ENCODE measurements at regions of chr17 and their contacts with region 1.

Region 1: GRCh38 chr17:43483674-43484372 is at the start of gene DHX8:
- DNase-seq: peak; percentile 99
- ATAC-seq: peak; percentile 94
- H3K4me3 Mint-ChIP-seq: peak within 1 kb of the TSS; percentile 100
- H3K27ac Mint-ChIP-seq: peak within 1 kb of the TSS; percentile 99
- H3K4me1 Mint-ChIP-seq: peaks cover 19% of the 10 kb centered on the region
- H3K27me3 Mint-ChIP-seq: no peaks in the 10 kb centered on the region
- total RNA-seq, gene DHX8: 42.6 to 46.9 TPM

Region 2: DNA sequence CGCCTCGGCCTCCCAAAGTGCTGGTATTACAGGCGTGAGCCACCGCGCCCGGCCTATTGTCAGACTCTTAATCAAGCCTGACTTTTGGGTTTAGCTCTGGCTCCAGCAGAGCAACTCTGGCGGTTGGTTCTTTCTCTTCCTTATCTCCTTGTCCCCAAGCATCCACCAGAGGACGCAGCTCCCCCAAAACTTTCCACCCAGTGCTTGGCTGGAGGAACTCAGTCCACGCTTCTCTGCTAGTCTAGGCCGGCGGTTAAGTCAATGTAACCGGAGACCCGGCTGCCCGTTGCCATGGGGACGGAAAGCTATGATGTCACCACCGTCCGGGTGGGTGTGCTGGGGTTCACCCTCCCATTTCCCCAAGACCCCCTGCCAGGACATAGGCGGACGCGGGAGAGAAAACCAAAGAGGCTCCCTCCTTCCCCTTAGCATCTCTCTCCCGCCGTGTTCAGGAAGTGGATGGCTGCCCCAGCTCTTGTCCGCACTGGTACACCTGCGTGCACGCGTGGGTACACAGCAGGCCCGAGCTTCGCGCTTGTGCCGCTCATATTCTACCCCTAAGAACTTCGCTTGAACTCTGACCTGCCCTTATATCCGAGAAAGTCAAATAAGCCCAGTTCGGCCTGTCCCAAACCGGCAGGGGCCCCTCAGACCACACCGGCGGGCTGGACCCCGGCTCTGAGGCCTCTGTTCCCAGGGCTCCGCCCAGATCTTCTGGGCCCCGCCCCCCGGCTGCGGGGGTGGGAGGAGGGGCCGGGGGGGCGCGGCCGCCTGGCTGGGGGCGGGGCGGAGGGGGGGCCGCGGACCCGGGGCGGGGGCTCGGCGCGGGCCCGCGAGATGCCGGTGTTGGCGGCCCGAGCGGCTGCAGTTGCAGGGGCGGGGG is 459.2 kb before region 1 on chr17 and contains the start of gene RND2:
- CTCF ChIA-PET with region 1: no interaction called
- POLR2A ChIA-PET with region 1: no interaction called
- intact Hi-C with region 1: loop called in 1 of 2 experiments (anchors 5 kb)
- DNase-seq: peak; percentile 89
- ATAC-seq: peak; percentile 68
- H3K4me3 Mint-ChIP-seq: peak within 1 kb of the TSS; percentile 78
- H3K27ac Mint-ChIP-seq: peak within 1 kb of the TSS; percentile 71
- H3K4me1 Mint-ChIP-seq: peaks cover 26% of the 10 kb centered on the region
- H3K27me3 Mint-ChIP-seq: no peaks in the 10 kb centered on the region
- total RNA-seq, gene RND2: 0.05 to 0.16 TPM

Region 3: GRCh38 chr17:43200127-43200526 is 283.7 kb before region 1 on chr17:
- CTCF ChIA-PET with region 1: no interaction called
- POLR2A ChIA-PET with region 1: no interaction called
- intact Hi-C with region 1: no loop called
- DNase-seq: peak; percentile 30
- ATAC-seq: peak; percentile 61
- H3K4me3 Mint-ChIP-seq: no peak overlapping the region
- H3K27ac Mint-ChIP-seq: peak overlapping the region; percentile 37
- H3K4me1 Mint-ChIP-seq: peaks cover 8% of the 10 kb centered on the region
- H3K27me3 Mint-ChIP-seq: no peaks in the 10 kb centered on the region

Region 4: DNA sequence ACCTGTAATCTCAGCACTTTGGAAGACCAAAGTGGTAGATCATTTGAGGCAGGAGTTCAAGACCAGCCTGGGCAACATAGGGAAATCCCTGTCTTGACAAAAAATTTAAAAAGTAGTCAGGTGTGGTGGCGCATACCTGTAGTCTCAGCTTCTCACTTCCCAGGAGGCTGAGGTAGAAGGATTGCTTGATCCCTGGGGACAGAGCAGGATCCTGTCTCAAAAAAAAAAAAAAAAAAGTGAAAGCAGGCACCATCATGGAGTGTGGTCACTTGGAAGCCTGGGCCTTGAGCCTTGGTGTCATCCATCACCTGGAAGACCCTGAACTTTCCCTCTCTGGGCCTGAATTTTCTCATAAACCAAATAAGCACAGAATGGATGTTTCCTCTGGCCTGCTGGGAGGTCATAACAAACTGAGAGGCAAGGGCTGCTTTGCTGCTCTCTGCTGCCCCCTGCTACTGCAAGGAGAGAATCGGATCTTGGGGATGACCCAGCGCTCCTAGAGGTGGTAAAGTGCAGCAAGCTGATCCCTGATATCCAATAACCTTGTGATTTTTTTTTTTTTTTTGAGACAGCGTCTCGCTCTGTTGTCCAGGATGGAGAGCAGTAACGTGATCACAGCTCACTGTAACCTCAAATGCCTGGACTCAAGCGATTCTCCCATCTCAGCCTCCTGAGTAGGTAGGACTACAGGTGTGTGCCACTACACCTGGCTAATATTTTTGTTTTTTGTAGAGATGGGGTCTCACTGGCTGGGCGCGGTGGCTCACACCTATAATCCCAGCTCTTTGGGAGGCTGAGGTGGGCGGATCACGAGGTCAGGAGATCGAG is 174.1 kb before region 1 on chr17:
- CTCF ChIA-PET with region 1: no interaction called
- POLR2A ChIA-PET with region 1: no interaction called
- intact Hi-C with region 1: no loop called
- DNase-seq: no peak
- ATAC-seq: no peak
- H3K4me3 Mint-ChIP-seq: no peak overlapping the region
- H3K27ac Mint-ChIP-seq: no peak overlapping the region
- H3K4me1 Mint-ChIP-seq: peaks cover 7% of the 10 kb centered on the region
- H3K27me3 Mint-ChIP-seq: no peaks in the 10 kb centered on the region

Region 5: GRCh38 chr17:43367737-43368242 is 116.0 kb before region 1 on chr17:
- CTCF ChIA-PET with region 1: interaction called, 26 read pairs
- POLR2A ChIA-PET with region 1: interaction called, 72 read pairs
- intact Hi-C with region 1: loop called in 1 of 2 experiments (anchors 1 kb)
- DNase-seq: peak; percentile 62
- ATAC-seq: peak; percentile 53
- H3K4me3 Mint-ChIP-seq: peak overlapping the region; percentile 85
- H3K27ac Mint-ChIP-seq: peak overlapping the region; percentile 100
- H3K4me1 Mint-ChIP-seq: peaks cover 57% of the 10 kb centered on the region
- H3K27me3 Mint-ChIP-seq: no peaks in the 10 kb centered on the region

Region 6: DNA sequence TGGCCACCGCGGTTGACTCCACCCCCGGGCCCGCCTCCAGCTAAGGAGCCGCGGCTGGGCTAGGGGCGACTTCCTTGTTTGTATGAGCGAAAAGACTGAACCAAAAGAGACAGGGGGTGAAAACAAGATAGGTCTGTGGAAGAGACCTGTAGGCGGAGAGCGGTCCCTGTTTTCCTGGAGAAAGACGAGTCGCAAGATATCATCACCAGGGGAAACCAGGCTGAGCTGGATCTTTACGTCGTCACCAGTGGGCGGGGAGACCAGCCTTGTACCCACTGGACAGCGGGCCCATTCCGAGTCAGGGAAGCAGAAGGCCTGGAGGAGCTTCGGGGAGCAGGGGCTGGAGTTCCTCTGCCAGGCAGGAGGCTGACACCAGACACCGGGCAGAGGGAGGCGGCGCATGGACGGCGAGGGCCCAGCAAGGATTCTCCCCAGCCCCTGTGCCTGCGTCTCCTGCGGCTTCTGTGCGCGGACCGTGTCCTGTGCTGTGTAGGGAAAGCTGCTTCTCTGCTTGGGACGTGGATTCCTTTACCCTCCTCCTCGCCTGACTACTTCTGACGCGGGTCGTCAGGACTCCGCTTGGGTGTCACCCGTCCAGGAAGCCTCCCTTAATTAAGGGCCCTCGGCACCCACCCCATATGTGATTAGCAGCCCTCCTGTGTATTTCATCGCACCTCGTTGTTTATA is 95.3 kb before region 1 on chr17:
- CTCF ChIA-PET with region 1: interaction called, 240 read pairs
- POLR2A ChIA-PET with region 1: interaction called, 22 read pairs
- intact Hi-C with region 1: loop called (anchors 1 kb)
- DNase-seq: peak; percentile 95
- ATAC-seq: peak; percentile 82
- H3K4me3 Mint-ChIP-seq: peak overlapping the region; percentile 80
- H3K27ac Mint-ChIP-seq: peak overlapping the region; percentile 98
- H3K4me1 Mint-ChIP-seq: peaks cover 16% of the 10 kb centered on the region
- H3K27me3 Mint-ChIP-seq: no peaks in the 10 kb centered on the region

Region 7: GRCh38 chr17:43393944-43394482 is 89.8 kb before region 1 on chr17:
- CTCF ChIA-PET with region 1: interaction called, 240 read pairs
- POLR2A ChIA-PET with region 1: interaction called, 13 read pairs
- intact Hi-C with region 1: loop called (anchors 1 kb)
- DNase-seq: peak; percentile 93
- ATAC-seq: peak; percentile 55
- H3K4me3 Mint-ChIP-seq: no peak overlapping the region
- H3K27ac Mint-ChIP-seq: peak overlapping the region; percentile 31
- H3K4me1 Mint-ChIP-seq: peaks cover 20% of the 10 kb centered on the region
- H3K27me3 Mint-ChIP-seq: no peaks in the 10 kb centered on the region

Region 8: DNA sequence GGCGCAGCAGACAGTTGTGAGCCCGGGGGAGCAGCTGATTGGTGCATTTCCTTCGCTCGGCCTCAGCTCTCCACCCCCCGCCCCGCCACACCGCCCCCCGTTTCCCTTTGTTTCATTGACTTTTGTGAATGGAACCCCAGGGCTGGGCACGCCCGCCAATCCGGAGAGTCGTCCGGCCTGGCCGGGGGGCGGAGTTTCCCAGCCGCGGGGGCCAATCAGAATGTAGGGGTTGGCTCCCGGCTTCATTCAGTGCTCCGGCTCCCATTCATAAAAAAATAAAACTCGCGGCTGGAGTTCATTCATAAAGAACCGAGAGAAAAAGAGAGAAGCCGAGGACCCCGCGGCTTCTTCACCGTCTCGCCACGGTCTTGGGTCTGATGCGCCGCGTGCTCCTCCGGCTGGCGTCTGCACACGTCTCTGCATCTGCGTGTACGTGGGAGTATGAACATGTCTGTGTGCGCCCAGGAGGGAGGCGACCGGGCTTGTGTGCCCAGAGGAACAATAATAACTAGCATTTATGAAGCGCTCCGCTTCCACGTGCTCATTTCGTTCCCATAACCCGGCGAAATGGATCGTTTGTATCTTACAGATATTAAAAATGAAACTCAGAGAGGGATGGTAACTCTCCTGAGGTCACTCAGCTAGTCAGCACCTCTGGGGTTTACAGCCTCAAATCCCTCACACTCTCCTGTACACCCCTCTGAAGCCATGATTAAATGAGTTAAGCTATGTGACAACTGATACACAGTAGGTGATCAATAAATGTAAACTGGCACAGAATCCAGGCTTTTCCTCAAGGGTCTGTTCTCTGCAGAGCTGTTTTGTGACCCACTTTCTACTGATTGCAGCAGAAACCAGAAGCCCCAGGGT is 62.7 kb after region 1 on chr17 and contains the start of gene ETV4:
- CTCF ChIA-PET with region 1: interaction called, 3 read pairs
- POLR2A ChIA-PET with region 1: no interaction called
- intact Hi-C with region 1: loop called in 1 of 2 experiments (anchors 1 kb)
- DNase-seq: peak; percentile 96
- ATAC-seq: peak; percentile 94
- H3K4me3 Mint-ChIP-seq: peak within 1 kb of the TSS; percentile 75
- H3K27ac Mint-ChIP-seq: peak within 1 kb of the TSS; percentile 16
- H3K4me1 Mint-ChIP-seq: peaks cover 17% of the 10 kb centered on the region
- H3K27me3 Mint-ChIP-seq: peaks cover 49% of the 10 kb centered on the region
- total RNA-seq, gene ETV4: 2.9 to 3.3 TPM

Region 9: DNA sequence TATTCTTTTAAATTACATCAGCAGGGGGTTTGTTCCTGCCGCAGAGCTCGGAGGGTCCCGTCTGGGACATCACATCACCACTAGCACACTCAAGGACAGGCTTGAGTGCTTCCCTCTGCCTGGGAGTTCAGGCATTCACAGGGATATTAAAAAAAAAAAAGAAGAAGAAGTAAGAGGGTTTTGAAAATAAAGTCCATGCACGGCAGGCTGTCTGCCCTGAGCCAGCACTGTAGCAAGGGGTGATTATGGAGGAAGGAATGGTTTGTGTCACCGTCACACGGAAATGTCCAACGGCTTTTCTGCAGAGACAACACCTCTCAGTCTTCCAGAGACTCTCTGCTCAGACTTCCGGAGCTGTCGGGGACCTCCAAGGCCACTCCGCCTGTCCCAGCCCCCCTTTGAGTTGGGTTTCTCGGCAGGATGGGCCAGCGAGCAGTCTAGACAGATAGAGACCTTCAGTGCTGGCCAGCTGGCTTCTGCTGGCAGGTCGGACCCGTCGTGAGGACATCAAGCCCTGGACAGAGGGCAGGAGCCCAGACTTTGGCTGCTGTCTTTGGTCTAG is 144.3 kb after region 1 on chr17:
- CTCF ChIA-PET with region 1: no interaction called
- POLR2A ChIA-PET with region 1: no interaction called
- intact Hi-C with region 1: no loop called
- DNase-seq: no peak
- ATAC-seq: no peak
- H3K4me3 Mint-ChIP-seq: no peak overlapping the region
- H3K27ac Mint-ChIP-seq: no peak overlapping the region
- H3K4me1 Mint-ChIP-seq: peaks cover 4% of the 10 kb centered on the region
- H3K27me3 Mint-ChIP-seq: peaks cover 5% of the 10 kb centered on the region

Region 10: GRCh38 chr17:43814714-43815113 is 330.9 kb after region 1 on chr17:
- CTCF ChIA-PET with region 1: no interaction called
- POLR2A ChIA-PET with region 1: no interaction called
- intact Hi-C with region 1: no loop called
- DNase-seq: no peak
- ATAC-seq: no peak
- H3K4me3 Mint-ChIP-seq: no peak overlapping the region
- H3K27ac Mint-ChIP-seq: no peak overlapping the region
- H3K4me1 Mint-ChIP-seq: no peaks in the 10 kb centered on the region
- H3K27me3 Mint-ChIP-seq: no peaks in the 10 kb centered on the region

Region 11: GRCh38 chr17:44014437-44015172 is 530.8 kb after region 1 on chr17 and contains the start of gene TMEM101:
- CTCF ChIA-PET with region 1: no interaction called
- POLR2A ChIA-PET with region 1: interaction called, 4 read pairs
- intact Hi-C with region 1: loop called in 1 of 2 experiments (anchors 2 kb)
- DNase-seq: peak; percentile 94
- ATAC-seq: peak; percentile 99
- H3K4me3 Mint-ChIP-seq: peak within 1 kb of the TSS; percentile 96
- H3K27ac Mint-ChIP-seq: peak within 1 kb of the TSS; percentile 96
- H3K4me1 Mint-ChIP-seq: peaks cover 7% of the 10 kb centered on the region
- H3K27me3 Mint-ChIP-seq: no peaks in the 10 kb centered on the region
- total RNA-seq, gene TMEM101: 17.6 to 22.7 TPM